Right ventricle myocardium inferior (tissue), 1 donor: ENCODE measurements at regions of chr5 and their contacts with region 1.

Region 1: GRCh38 chr5:173625696-173626504 is 9.4 kb upstream of the BOD1 start:
- DNase-seq: no peak
- ATAC-seq: peak; percentile 59

Region 2: GRCh38 chr5:173669483-173670175 is 43.7 kb after region 1 on chr5:
- intact Hi-C with region 1: loop called (anchors 5 kb)
- DNase-seq: no peak
- ATAC-seq: no peak

Region 3: DNA sequence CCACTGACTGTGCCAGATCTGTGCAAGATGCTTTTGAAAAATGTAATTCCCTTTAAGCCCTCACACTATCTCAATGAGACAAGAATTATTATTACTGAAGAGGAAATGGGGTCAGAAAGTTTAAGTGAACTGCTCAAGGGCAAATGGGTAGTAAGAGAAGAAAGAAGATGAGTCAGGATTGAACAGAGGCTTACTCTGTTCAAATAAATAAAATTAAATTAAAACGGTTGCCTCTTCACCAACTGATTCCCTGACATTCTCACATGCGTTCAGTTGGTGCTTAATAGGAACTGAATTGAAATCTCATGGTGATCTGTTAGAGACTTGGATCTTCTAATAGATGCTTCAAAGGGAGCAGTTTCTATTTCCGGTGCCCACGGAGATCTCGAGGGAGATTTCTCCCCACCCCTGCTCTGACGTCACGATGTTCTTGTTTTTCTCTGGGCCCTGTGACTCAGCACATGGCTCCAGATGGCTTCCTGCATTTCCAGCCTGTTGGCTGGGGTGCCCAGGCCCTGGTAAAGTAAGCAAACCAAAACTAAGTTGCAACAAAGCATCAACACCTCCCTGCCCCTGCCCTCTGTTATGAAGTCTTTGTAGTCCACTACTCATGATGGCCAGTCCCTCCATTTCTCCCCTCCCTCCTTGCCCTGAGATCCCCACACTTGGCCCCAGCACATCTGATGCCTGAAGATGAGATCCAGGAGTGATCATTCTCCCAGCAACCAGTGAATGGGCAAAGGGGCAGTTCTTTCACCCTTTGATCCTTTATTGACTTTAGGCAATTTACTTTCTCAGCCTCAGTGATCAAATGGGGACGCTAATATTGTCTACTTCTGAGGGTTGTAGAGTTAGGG is 156.1 kb after region 1 on chr5:
- intact Hi-C with region 1: no loop called
- DNase-seq: peak; percentile 89
- ATAC-seq: peak; percentile 82